CD8-positive, alpha-beta T cell (primary cell): ENCODE measurements at regions of chr10 and their contacts with region 1.

Region 1: DNA sequence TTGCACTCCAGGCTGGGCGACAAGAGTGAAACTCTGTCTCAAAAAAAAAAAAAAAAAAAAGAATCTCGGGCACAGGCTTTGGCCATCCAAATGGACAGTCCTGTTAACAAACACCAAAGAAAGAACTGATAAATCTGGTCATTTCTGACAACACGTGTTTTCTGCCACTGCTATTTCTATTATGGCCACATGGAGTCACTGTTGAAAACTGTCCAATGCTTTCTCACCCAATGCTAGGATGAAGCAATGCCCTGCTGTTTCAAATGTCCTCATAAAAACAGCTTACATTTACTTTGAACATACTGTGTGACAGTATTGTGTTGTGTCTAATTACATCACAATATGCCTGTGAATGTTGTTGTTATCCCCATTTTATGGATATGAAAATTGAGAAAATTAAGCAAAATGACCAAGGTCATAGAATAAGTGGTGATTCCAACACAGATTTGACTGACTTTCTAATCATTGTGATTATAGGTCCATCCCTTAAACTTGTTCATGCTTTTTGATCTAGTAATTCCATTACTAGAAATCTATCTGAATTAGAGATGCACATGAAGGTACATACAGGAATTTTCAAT is 19.9 kb upstream of the MAP3K8 start:
- DNase-seq: peak in 2 of 9 experiments; percentile 66 to 78
- ATAC-seq: peak; percentile 73
- H3K4me3 ChIP-seq: no peak overlapping the region
- H3K4me3 Mint-ChIP-seq: no peak overlapping the region
- H3K27ac ChIP-seq: no peak overlapping the region
- H3K27ac Mint-ChIP-seq: no peak overlapping the region
- H3K4me1 ChIP-seq: peaks cover 10% of the 10 kb centered on the region
- H3K4me1 Mint-ChIP-seq: peaks cover 9% of the 10 kb centered on the region
- H3K27me3 ChIP-seq: no peaks in the 10 kb centered on the region
- H3K27me3 Mint-ChIP-seq: no peaks in the 10 kb centered on the region
- CTCF ChIP-seq: peak; percentile 66

Region 2: GRCh38 chr10:29576681-29577080 is 837.4 kb before region 1 on chr10:
- CTCF ChIA-PET with region 1: no interaction called
- POLR2A ChIA-PET with region 1: no interaction called
- intact Hi-C with region 1: no loop called
- DNase-seq: no peak
- ATAC-seq: no peak
- H3K4me3 ChIP-seq: no peak overlapping the region
- H3K4me3 Mint-ChIP-seq: no peak overlapping the region
- H3K27ac ChIP-seq: no peak overlapping the region
- H3K27ac Mint-ChIP-seq: no peak overlapping the region
- H3K4me1 ChIP-seq: no peaks in the 10 kb centered on the region
- H3K4me1 Mint-ChIP-seq: no peaks in the 10 kb centered on the region
- H3K27me3 ChIP-seq: no peaks in the 10 kb centered on the region
- H3K27me3 Mint-ChIP-seq: no peaks in the 10 kb centered on the region
- CTCF ChIP-seq: no peak

Region 3: DNA sequence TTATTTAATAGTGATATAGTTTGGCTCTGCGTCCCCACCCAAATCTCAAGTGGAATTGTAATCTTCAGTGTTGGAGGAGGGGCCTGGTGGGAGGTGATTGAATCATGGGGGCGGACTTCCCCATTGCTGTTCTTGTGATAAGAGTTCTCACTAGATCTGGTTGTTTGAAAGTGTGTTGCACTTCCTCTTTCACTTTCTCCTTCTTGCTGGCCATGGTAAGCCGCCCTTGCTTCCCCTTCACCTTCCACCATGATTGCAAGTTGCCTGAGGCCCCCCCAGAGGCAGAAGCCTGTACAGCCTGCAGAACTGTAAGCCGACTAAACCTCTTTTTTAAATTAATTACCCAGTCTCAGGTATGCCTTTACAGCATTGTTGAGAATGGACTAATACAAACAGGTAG is 166.4 kb before region 1 on chr10:
- CTCF ChIA-PET with region 1: no interaction called
- POLR2A ChIA-PET with region 1: no interaction called
- intact Hi-C with region 1: no loop called
- DNase-seq: peak in 1 of 9 experiments; percentile 6
- ATAC-seq: no peak
- H3K4me3 ChIP-seq: no peak overlapping the region
- H3K4me3 Mint-ChIP-seq: no peak overlapping the region
- H3K27ac ChIP-seq: no peak overlapping the region
- H3K27ac Mint-ChIP-seq: no peak overlapping the region
- H3K4me1 ChIP-seq: no peaks in the 10 kb centered on the region
- H3K4me1 Mint-ChIP-seq: peaks cover 10% of the 10 kb centered on the region
- H3K27me3 ChIP-seq: no peaks in the 10 kb centered on the region
- H3K27me3 Mint-ChIP-seq: peaks cover 2% of the 10 kb centered on the region
- CTCF ChIP-seq: no peak

Region 4: DNA sequence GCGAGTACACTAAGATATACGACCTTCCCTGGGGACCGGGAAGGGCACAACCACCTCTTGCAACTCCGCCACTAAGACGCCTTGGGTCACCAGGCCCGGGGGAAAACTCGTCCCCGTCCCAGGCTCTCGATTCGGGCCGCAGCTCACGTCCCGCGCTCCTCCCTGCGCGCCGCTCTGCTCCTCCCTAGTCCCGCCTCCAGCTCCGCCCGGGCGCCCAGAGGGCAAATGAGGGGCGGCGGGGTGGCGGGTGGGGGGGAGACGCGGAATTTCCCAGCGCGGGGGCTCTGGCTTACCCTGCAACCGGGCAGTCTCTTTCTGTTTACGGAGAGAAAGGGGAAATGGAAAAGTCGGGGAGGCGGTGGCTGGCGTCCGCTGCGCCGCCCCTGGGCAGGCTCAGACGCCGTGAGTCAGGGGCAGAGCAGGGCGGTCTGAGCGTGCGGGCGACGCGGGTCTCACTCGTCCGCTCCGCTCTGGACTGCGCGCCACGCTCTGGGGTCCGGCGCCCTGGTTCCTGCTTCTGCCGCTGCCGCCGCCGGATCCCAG is 19.7 kb after region 1 on chr10 and contains the start of gene MAP3K8:
- CTCF ChIA-PET with region 1: interaction called, 24 read pairs
- POLR2A ChIA-PET with region 1: no interaction called
- intact Hi-C with region 1: loop called (anchors 2 kb)
- DNase-seq: peak; percentile 62 to 95 (median 81)
- ATAC-seq: peak; percentile 76
- H3K4me3 ChIP-seq: peak within 1 kb of the TSS; percentile 84 to 92
- H3K4me3 Mint-ChIP-seq: peak within 1 kb of the TSS; percentile 91
- H3K27ac ChIP-seq: peak within 1 kb of the TSS; percentile 50 to 90
- H3K27ac Mint-ChIP-seq: peak within 1 kb of the TSS; percentile 87
- H3K4me1 ChIP-seq: peaks cover 25% of the 10 kb centered on the region
- H3K4me1 Mint-ChIP-seq: peaks cover 44% of the 10 kb centered on the region
- H3K27me3 ChIP-seq: peaks cover 0 to 3% of the 10 kb centered on the region in 2 experiments
- H3K27me3 Mint-ChIP-seq: no peaks in the 10 kb centered on the region
- CTCF ChIP-seq: no peak
- total RNA-seq, gene MAP3K8: 42.4 to 48.6 TPM